ENCODE measurements at regions of chr20 and their contacts with region 1.

Region 1: DNA sequence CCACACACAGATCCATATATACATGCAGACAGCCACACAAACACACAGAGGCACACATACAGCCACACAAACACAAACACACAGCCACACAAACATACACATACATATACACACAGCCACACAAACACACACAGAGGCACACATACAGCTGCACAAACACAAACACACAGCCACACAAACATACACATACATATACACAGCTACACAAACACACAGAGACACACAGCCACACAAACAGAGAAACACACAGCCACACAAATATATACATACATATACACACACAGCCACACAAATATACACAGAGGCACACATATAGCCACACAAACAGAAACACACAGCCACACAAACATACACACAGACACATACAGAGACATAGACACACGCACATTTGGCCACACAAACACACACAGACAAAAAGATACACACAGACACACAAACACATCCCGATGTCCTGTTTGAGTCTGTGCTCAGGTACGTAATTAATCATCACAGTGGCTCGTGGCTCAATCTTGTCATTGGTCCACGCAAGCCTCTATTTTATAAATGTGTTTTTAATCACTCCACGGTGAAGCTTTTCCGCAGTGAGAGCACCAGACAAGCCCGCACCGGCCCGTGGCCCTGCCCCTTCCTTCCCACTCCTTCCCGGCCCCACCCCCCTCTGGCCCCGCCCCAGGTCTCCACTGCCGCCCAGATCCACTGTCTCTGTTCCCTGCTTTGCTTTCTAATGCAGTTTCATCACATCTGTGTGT is 135.3 kb downstream of the CDH4 start:
- DNase-seq: peak; percentile 78
- H3K4me3 ChIP-seq: peak overlapping the region; percentile 26
- H3K27ac ChIP-seq: no peak overlapping the region
- H3K4me1 ChIP-seq: peaks cover 19% of the 10 kb centered on the region
- H3K27me3 ChIP-seq: no peaks in the 10 kb centered on the region
- CTCF ChIP-seq: no peak

Region 2: DNA sequence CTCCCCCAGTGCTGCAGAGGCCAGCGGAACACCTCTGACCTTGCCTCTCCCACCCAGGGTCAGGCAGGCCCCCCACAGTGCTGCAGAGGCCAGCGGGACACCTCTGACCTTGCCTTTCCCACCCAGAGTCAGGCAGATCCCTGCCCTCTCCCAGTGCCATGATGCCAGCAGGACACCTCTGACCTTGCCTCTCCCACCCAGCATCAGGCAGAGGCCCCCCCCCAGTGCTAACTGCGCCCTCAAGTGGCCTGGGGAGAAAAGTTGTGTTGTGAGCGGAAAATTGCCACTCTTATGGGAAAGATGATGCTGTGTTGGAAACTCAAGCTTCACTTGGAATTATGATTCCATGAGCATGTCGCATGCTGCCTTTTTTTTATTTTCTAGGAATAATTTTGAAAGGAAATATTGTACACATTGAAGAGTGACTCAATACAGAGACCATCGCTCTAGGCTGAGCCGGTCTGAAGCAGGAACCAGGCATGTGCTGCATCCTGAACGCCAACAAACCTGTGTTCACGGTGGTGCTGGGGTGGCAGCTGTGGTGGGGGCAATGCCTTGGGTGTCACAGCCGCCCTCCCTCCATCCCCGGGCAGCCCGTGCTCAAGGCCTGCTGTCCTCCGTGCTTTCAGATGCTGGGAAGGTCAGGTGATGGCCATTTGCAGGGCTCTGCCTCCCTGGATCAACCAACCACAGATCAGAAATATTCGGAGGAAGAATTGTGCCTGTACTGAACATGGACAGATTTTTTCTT is 36.7 kb before region 1 on chr20:
- CTCF ChIA-PET with region 1: no interaction called
- POLR2A ChIA-PET with region 1: no interaction called
- intact Hi-C with region 1: no loop called
- DNase-seq: no peak
- H3K4me3 ChIP-seq: no peak overlapping the region
- H3K27ac ChIP-seq: no peak overlapping the region
- H3K4me1 ChIP-seq: peaks cover 12% of the 10 kb centered on the region
- H3K27me3 ChIP-seq: peaks cover 55% of the 10 kb centered on the region
- CTCF ChIP-seq: peak; percentile 22; the same call in 1 of the 2 replicates

Region 3: DNA sequence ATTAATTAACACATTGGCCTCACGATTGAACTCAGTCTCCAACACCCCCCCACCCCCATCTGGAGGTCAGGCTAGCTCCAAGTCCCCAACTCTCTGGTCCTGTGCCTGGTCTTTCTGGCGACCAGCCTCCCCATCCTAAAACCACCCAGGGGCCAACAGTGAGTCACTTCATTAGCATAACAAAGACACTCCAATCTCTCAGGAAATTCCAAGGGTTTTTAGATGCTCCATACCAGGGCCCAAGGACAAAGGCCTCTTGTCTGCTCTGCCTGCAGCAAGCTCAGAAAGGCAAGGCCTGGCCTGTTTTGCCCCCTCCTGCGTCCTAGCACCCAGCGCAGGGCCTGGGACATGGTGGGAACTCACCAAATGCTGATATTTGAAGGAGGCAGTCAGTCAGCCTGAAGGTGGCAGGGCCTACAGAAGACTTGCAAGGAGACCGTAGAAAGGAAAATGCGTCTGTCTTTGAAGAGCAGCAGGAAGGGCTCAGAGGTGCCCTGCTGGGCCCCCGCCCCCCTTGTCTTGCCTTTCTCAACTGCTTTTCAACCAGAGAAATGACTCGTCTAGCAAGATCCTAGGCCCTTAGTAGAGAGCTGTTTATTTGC is 49.4 kb after region 1 on chr20:
- CTCF ChIA-PET with region 1: no interaction called
- POLR2A ChIA-PET with region 1: interaction called, 12 read pairs
- intact Hi-C with region 1: no loop called
- DNase-seq: peak; percentile 99
- H3K4me3 ChIP-seq: no peak overlapping the region
- H3K27ac ChIP-seq: peak overlapping the region; percentile 95
- H3K4me1 ChIP-seq: peaks cover 63% of the 10 kb centered on the region
- H3K27me3 ChIP-seq: no peaks in the 10 kb centered on the region
- CTCF ChIP-seq: peak; percentile 42

Measured in A673 (cell line).